Calu3 (cell line): ENCODE measurements at regions of chr10 and their contacts with region 1.

Region 1: GRCh38 chr10:24989867-24990266 is 26.1 kb downstream of the ENKUR start:
- DNase-seq: no peak
- H3K4me3 Mint-ChIP-seq: no peak overlapping the region
- H3K27ac Mint-ChIP-seq: no peak overlapping the region
- H3K4me1 Mint-ChIP-seq: no peaks in the 10 kb centered on the region
- H3K27me3 Mint-ChIP-seq: no peaks in the 10 kb centered on the region
- CTCF ChIP-seq: no peak

Region 2: DNA sequence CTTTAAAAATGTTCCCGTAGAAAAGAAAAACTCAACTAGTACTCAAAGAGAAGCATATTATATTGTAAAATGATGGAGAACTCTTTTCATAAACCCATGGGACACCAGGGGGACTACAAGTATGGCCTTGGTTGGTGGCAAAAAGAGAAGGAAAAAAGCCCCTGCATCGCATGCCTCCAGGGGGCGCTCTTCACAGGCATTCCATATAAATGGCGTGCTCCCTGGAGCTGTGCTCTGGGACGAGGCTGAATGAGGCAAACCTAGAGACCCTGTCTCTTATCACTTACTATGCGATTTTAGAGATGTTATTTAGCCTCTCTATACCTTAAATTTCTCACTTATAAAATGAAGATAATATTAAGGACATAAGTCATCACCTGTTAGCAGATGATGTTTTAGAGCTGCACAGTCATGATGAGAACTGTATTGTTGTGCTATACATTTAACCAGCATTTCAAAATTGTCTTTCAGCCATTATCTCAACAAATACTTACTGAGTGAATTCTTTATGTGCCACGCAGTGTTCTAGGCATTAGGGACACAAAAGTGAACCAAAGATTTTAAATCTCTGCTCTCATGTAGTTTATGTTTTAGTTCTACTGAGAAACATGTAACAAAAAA is 372.0 kb before region 1 on chr10:
- CTCF ChIA-PET with region 1: interaction called, 6 read pairs
- intact Hi-C with region 1: loop called (anchors 2 kb)
- DNase-seq: peak; percentile 75
- H3K4me3 Mint-ChIP-seq: no peak overlapping the region
- H3K27ac Mint-ChIP-seq: no peak overlapping the region
- H3K4me1 Mint-ChIP-seq: peaks cover 12% of the 10 kb centered on the region
- H3K27me3 Mint-ChIP-seq: no peaks in the 10 kb centered on the region
- CTCF ChIP-seq: peak; percentile 88

Region 3: DNA sequence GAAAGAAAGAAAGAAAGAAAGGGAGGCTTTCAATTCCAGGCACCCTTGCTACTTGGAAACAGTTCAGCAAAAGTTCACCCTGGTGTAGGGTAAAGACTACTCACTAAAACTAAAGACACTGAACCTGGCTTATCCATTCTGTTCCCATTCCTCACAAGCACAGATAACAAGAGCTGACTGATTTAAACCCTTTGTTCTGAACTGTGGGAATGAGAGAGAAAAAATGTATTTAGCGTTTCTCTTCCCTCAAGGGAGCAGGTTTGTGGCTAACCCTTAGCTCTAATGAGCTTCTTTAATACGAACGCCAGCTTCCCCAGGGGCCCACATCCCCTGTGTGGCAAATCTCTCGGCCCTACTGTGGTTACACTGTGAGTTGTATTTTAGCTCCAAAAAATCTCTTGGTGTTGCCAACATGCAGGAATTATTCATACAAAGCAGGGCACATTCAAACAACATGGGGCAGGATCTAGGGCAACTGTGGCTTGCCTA is 60.8 kb before region 1 on chr10:
- CTCF ChIA-PET with region 1: no interaction called
- intact Hi-C with region 1: no loop called
- DNase-seq: no peak
- H3K4me3 Mint-ChIP-seq: no peak overlapping the region
- H3K27ac Mint-ChIP-seq: no peak overlapping the region
- H3K4me1 Mint-ChIP-seq: no peaks in the 10 kb centered on the region
- H3K27me3 Mint-ChIP-seq: no peaks in the 10 kb centered on the region
- CTCF ChIP-seq: no peak

Region 4: GRCh38 chr10:25113191-25114035 is 123.5 kb after region 1 on chr10:
- CTCF ChIA-PET with region 1: no interaction called
- intact Hi-C with region 1: no loop called
- DNase-seq: peak; percentile 89
- H3K4me3 Mint-ChIP-seq: peak overlapping the region; percentile 53
- H3K27ac Mint-ChIP-seq: peak overlapping the region; percentile 59
- H3K4me1 Mint-ChIP-seq: peaks cover 26% of the 10 kb centered on the region
- H3K27me3 Mint-ChIP-seq: no peaks in the 10 kb centered on the region
- CTCF ChIP-seq: peak; percentile 85